ENCODE measurements at regions of chr18 and their contacts with region 1.

Region 1: DNA sequence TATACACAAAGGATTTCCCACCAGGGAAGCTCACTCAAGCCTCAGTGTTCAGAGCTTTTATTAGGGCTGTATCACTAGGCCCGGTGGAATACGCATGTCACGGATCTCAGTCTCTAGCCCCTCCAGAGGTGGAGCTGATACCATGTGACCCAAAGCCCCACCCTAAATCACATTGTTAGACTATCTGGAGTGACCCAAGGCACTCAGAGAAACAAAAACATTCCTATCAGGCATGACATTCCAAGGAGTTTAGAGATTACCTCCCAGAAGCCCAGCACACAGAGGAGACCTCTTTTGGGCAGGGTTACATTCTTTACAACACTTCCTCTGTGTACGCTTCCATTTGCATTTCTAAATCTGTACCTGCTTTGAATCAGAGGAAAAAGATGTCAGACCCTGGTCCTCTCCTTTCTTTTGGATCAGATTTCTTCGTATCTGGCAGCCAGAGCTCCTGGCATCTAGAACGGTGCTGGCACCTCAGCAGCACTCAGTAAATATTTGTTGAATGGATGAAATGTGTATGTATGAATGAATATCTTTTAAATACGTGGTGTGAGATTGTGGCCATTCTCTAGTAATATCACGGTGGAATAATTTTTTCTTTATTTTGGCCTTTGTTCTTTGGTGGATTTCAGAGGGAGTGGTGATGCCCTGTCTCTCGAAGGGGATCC is 37.7 kb upstream of the SMAD2 start:
- DNase-seq: peak; percentile 28 to 88
- ATAC-seq: peak; percentile 93 to 97
- H3K4me3 ChIP-seq: 0 out of 3 replicates have a peak overlapping the region, but pooled peaks have one; percentile 23
- H3K27ac ChIP-seq: peak overlapping the region; percentile 85 to 88
- H3K4me1 ChIP-seq: peaks cover 35% of the 10 kb centered on the region
- CTCF ChIP-seq: no peak
- EP300 ChIP-seq: peak in 1 of 2 experiments; percentile 48; a peak in 1 of 5 replicates
- POLR2A ChIP-seq: no peak
- RAD21 ChIP-seq: no peak

Region 2: DNA sequence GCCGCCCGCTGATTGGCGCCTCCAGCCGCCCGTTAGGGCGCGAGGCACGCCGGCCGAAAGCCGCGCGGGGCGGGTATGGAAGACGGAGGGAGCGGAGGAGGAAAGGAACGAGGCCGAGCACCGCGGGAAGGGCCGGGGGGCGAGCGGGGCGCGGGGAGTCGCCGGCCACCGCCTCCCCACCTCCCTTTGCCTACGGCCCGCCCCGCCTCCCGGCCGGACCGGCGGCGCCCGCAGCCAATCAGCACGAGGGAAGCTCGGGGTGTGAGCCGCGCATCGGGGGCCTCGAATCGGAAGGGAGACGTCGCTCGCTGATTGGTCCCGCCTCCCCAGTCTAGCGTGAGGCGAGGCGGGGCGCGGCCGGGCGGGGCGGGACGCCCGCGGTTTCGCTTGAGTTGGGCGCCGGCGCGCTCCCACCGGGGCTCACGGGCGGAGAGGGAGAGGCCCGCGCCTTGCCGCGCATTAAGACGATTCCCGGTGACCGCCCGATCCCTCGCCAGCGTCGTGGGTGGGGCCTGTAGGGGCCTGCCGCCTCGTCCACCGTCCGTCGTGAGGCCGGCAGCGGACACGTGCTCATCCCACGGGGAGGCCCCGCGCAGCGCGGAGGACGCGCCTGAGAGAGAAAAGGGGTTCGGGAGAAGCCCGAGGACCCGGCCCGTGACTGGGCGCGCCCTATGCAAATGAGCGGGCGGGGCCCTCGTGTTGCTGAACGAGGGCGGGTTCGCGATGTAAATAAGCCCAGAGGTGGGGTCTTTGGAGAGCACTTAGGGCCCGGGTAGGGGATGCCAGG is 37.0 kb before region 1 on chr18:
- CTCF ChIA-PET with region 1: no interaction called
- POLR2A ChIA-PET with region 1: interaction called, 13 read pairs
- DNase-seq: peak; percentile 68 to 96
- ATAC-seq: peak; percentile 84 to 92
- H3K4me3 ChIP-seq: peak overlapping the region; percentile 87
- H3K27ac ChIP-seq: peak overlapping the region; percentile 98 to 100
- H3K4me1 ChIP-seq: peaks cover 35% of the 10 kb centered on the region
- CTCF ChIP-seq: no peak
- EP300 ChIP-seq: no peak
- POLR2A ChIP-seq: peak; percentile 65
- RAD21 ChIP-seq: no peak

Region 3: GRCh38 chr18:47949202-47949601 is 18.9 kb before region 1 on chr18:
- CTCF ChIA-PET with region 1: no interaction called
- POLR2A ChIA-PET with region 1: no interaction called
- DNase-seq: no peak
- ATAC-seq: no peak
- H3K4me3 ChIP-seq: no peak overlapping the region
- H3K27ac ChIP-seq: peak overlapping the region in 1 of 2 experiments; percentile 27; a peak in 1 of 6 replicates
- H3K4me1 ChIP-seq: peaks cover 22% of the 10 kb centered on the region
- CTCF ChIP-seq: no peak
- EP300 ChIP-seq: no peak
- POLR2A ChIP-seq: no peak
- RAD21 ChIP-seq: no peak

Region 4: DNA sequence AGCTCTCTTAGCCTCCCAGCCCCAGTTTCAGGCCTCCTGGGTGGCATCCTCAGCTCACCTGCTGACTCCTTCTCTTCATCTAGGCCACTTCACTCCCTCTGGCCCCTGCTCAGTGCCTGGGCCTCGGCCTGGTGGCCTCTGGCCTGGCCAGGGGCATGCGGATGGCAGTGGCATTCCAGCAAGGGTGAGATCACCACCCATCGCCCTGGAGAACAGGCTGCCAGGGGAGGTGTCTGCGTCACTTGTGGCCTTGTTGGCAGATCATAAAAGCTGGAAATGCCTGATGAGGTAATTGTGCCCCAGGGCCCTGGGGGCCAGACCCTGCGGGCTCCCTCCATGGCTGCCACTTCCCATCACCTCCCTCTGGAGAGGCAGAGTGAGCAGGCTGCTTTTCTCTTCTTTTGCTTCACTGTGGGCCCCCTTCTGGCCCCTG is 34.8 kb after region 1 on chr18:
- CTCF ChIA-PET with region 1: interaction called, 6 read pairs
- POLR2A ChIA-PET with region 1: interaction called, 15 read pairs
- DNase-seq: peak; percentile 72 to 97
- ATAC-seq: peak; percentile 83 to 90
- H3K4me3 ChIP-seq: 0 out of 3 replicates have a peak overlapping the region, but pooled peaks have one; percentile 18
- H3K27ac ChIP-seq: peak overlapping the region; percentile 99
- H3K4me1 ChIP-seq: peaks cover 49% of the 10 kb centered on the region
- CTCF ChIP-seq: no peak
- EP300 ChIP-seq: peak; percentile 99 to 100
- POLR2A ChIP-seq: no peak; the same call in 1 of the 2 replicates
- RAD21 ChIP-seq: peak; percentile 15 to 57; a peak in 4 of 5 replicates